ENCODE measurements at regions of chr2 and their contacts with region 1.

Region 1: GRCh38 chr2:169109502-169110409 is 40.4 kb downstream of the DHRS9 start:
- DNase-seq: no peak
- H3K4me3 ChIP-seq: no peak overlapping the region
- H3K27ac ChIP-seq: no peak overlapping the region
- H3K4me1 ChIP-seq: peaks cover 0 to 6% (median 4%) of the 10 kb centered on the region in 4 donors
- H3K27me3 ChIP-seq: peaks cover 0 to 4% (median 0%) of the 10 kb centered on the region in 4 donors
- CTCF ChIP-seq: peak; percentile 69 to 91 (median 75)
- EP300 ChIP-seq: no peak
- POLR2A ChIP-seq: no peak

Region 2: GRCh38 chr2:169275696-169276444 is 166.1 kb after region 1 on chr2:
- intact Hi-C with region 1: loop called (anchors 10 kb)
- DNase-seq: no peak
- H3K4me3 ChIP-seq: no peak overlapping the region
- H3K27ac ChIP-seq: no peak overlapping the region
- H3K4me1 ChIP-seq: no peaks in the 10 kb centered on the region
- H3K27me3 ChIP-seq: no peaks in the 10 kb centered on the region
- CTCF ChIP-seq: peak in 1 of 3 experiments; percentile 20
- EP300 ChIP-seq: no peak
- POLR2A ChIP-seq: no peak